ENCODE measurements at regions of chr21 and their contacts with region 1.

Region 1: GRCh38 chr21:39441502-39442475 is 3.8 kb downstream of the LCA5L start:
- DNase-seq: peak; percentile 53
- ATAC-seq: no peak
- H3K4me3 Mint-ChIP-seq: no peak overlapping the region
- H3K27ac Mint-ChIP-seq: no peak overlapping the region
- H3K4me1 Mint-ChIP-seq: peaks cover 15% of the 10 kb centered on the region
- H3K27me3 Mint-ChIP-seq: peaks cover 41% of the 10 kb centered on the region

Region 2: DNA sequence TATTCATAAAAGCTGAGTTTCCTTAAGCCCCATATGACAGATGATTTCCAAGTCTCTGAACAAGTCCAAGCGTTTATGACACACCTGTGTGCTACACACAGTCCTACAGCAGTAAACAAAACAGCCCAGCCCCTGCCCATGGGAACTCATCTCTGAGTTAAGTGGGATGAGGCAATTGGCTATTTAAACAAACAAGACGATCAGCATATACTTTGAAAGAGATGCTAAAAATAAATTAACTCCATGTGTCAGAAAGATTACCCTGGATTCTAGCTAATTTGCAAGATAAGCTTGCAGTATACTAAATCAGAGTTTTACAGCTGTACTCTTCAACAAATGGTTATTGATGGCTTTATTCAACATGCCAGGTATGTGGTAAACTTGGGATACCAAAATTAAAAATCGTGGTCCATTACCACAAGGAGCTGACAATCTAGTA is 265.5 kb before region 1 on chr21:
- CTCF ChIA-PET with region 1: interaction called, 11 read pairs
- POLR2A ChIA-PET with region 1: no interaction called
- DNase-seq: no peak
- ATAC-seq: no peak
- H3K4me3 Mint-ChIP-seq: no peak overlapping the region
- H3K27ac Mint-ChIP-seq: no peak overlapping the region
- H3K4me1 Mint-ChIP-seq: peaks cover 21% of the 10 kb centered on the region
- H3K27me3 Mint-ChIP-seq: no peaks in the 10 kb centered on the region

Region 3: GRCh38 chr21:39422527-39423241 is 19.1 kb before region 1 on chr21:
- CTCF ChIA-PET with region 1: interaction called, 10 read pairs
- POLR2A ChIA-PET with region 1: no interaction called
- DNase-seq: no peak
- ATAC-seq: no peak
- H3K4me3 Mint-ChIP-seq: no peak overlapping the region
- H3K27ac Mint-ChIP-seq: no peak overlapping the region
- H3K4me1 Mint-ChIP-seq: no peaks in the 10 kb centered on the region
- H3K27me3 Mint-ChIP-seq: no peaks in the 10 kb centered on the region

Region 4: DNA sequence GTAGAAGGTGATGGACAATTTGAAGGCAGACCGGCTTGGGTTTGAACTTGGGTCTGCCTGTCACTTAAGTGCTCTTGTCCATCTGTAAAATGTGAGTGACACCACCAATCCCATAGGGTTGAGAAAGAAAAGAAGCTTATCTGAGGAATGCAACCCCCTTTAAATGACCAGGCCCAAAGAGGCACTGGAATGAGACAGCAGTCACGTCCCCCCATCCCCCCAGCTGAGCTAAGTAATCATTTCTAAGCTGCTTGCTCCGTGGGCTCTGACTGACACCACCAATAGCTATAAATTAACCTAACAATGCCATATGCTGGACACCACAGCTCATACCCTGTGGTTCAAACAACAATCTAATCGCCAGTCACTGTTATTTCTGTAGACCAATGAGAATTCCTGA is 11.3 kb before region 1 on chr21:
- CTCF ChIA-PET with region 1: interaction called, 17 read pairs
- POLR2A ChIA-PET with region 1: no interaction called
- DNase-seq: no peak
- ATAC-seq: no peak
- H3K4me3 Mint-ChIP-seq: no peak overlapping the region
- H3K27ac Mint-ChIP-seq: no peak overlapping the region
- H3K4me1 Mint-ChIP-seq: no peaks in the 10 kb centered on the region
- H3K27me3 Mint-ChIP-seq: peaks cover 2% of the 10 kb centered on the region

Measured in activated CD8-positive, alpha-beta T cell treated with anti-CD3 and anti-CD28 coated beads, Interleukin-2, amount 10 ng/mL, durations not matched to agents 7 days and 5 days (primary cell).